CD8-positive, alpha-beta memory T cell (primary cell): ENCODE measurements at regions of chr2 and their contacts with region 1.

Region 1: GRCh38 chr2:134453973-134454372 is 200.1 kb downstream of the MGAT5 start:
- DNase-seq: no peak
- H3K4me3 ChIP-seq: no peak overlapping the region
- H3K4me3 Mint-ChIP-seq: no peak overlapping the region
- H3K27ac ChIP-seq: no peak overlapping the region
- H3K27ac Mint-ChIP-seq: peak overlapping the region in 1 of 8 donors; percentile 83
- H3K4me1 ChIP-seq: no peaks in the 10 kb centered on the region
- H3K4me1 Mint-ChIP-seq: peaks cover 0 to 4% (median 0%) of the 10 kb centered on the region in 3 donors
- H3K27me3 ChIP-seq: no peaks in the 10 kb centered on the region
- H3K27me3 Mint-ChIP-seq: peaks cover 0 to 2% of the 10 kb centered on the region in 2 donors

Region 2: DNA sequence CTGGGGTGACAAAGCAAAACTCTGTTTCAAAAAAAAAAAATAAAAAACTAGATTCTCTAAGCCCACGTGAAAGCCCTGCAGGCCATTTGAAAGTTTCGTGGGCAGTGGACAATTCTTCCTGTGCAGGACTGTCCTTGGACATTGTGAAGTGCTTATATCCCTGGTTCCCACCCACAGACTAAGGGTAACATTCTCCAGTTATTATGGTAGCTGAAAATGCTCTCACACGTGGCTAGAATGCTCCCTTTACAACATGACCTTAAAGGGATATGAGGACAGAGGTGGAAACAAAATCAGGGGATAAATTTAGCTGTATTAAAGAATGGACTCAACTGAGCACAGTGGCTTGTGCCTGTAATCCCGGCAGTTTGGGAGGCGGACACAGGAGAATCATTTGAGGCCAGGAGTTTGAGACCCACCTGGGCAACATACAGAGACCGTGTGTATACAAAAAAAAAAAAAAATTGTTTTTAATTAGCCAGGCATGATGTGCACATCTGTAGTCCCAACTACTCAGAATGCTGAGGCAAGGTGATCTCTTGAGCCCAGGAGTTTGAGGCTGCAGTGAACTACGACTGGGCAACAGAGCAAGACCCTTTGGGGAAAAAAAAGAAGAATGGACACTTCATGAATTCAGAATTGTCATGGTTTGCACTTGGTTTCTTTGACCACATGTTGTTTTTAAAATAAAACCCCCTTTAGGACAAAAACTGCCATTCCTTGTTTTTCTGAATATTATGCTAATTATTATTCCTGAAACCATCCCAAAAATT is 32.2 kb before region 1 on chr2:
- CTCF ChIA-PET with region 1: no interaction called
- POLR2A ChIA-PET with region 1: no interaction called
- DNase-seq: no peak
- H3K4me3 ChIP-seq: no peak overlapping the region
- H3K4me3 Mint-ChIP-seq: no peak overlapping the region
- H3K27ac ChIP-seq: no peak overlapping the region
- H3K27ac Mint-ChIP-seq: peak overlapping the region in 1 of 8 donors; percentile 47
- H3K4me1 ChIP-seq: no peaks in the 10 kb centered on the region
- H3K4me1 Mint-ChIP-seq: peaks cover 2 to 12% (median 4%) of the 10 kb centered on the region in 3 donors
- H3K27me3 ChIP-seq: no peaks in the 10 kb centered on the region
- H3K27me3 Mint-ChIP-seq: no peaks in the 10 kb centered on the region

Region 3: DNA sequence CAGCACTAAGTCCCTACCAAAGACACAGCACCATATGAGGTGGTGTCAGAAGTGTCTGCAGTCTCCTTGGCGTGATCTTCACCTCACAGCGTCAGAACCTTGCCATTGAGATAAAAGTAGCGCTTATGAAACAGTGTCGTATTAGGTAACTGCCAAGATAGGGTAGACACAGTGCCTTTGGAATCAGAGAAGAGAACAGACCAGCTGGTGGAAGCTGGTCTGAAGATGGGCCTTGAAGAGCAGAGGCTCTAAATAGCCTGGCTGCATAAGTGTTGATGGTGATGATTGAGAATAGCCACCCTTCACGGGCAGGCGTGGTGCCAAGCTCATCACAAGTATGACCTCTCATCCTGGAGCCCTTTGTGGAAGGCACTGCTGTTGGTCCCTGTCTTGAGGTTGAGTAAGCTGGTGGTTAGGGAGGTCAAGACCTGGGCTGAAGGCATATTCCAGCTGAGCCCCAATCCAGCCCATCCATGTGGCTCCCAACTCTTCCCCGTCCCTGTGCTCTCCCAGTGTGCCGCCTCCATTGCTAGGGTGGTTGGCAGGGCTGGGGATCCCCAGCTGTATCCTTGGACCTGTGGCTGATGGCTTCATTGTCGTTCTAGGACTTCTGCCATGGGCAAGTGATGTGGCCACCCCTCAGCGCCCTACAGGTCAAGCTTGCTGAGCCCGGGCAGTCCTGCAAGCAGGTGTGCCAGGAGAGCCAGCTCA is 12.7 kb before region 1 on chr2:
- CTCF ChIA-PET with region 1: interaction called, 13 read pairs
- POLR2A ChIA-PET with region 1: no interaction called
- DNase-seq: no peak
- H3K4me3 ChIP-seq: no peak overlapping the region
- H3K4me3 Mint-ChIP-seq: no peak overlapping the region
- H3K27ac ChIP-seq: no peak overlapping the region
- H3K27ac Mint-ChIP-seq: peak overlapping the region in 3 of 8 donors; percentile 20 to 66 (median 57)
- H3K4me1 ChIP-seq: no peaks in the 10 kb centered on the region
- H3K4me1 Mint-ChIP-seq: peaks cover 0 to 4% (median 3%) of the 10 kb centered on the region in 3 donors
- H3K27me3 ChIP-seq: no peaks in the 10 kb centered on the region
- H3K27me3 Mint-ChIP-seq: no peaks in the 10 kb centered on the region

Region 4: DNA sequence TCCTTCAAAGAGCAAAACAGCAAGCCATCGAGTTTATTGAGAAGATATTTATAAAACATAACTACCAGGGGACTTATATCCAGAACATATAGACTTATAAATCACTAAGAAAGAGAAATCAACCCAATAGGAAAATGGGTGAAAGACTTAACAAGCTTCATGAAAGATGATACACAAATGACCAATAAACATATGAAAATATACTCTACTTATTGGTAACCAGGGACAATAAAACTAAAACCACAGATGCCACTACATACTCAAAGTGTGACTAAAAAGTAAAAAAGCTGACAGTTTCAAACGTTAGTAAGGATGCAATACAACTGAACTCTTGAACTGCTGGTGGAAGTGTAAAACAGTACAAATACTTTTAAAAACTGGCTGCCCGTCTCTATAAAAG is 110.6 kb after region 1 on chr2:
- CTCF ChIA-PET with region 1: no interaction called
- POLR2A ChIA-PET with region 1: no interaction called
- DNase-seq: no peak
- H3K4me3 ChIP-seq: no peak overlapping the region
- H3K4me3 Mint-ChIP-seq: no peak overlapping the region
- H3K27ac ChIP-seq: no peak overlapping the region
- H3K27ac Mint-ChIP-seq: no peak overlapping the region
- H3K4me1 ChIP-seq: no peaks in the 10 kb centered on the region
- H3K4me1 Mint-ChIP-seq: peaks cover 0 to 9% (median 8%) of the 10 kb centered on the region in 3 donors
- H3K27me3 ChIP-seq: no peaks in the 10 kb centered on the region
- H3K27me3 Mint-ChIP-seq: peaks cover 5 to 26% of the 10 kb centered on the region in 2 donors